Natural killer cell (primary cell): ENCODE measurements at regions of chr11 and their contacts with region 1.

Region 1: DNA sequence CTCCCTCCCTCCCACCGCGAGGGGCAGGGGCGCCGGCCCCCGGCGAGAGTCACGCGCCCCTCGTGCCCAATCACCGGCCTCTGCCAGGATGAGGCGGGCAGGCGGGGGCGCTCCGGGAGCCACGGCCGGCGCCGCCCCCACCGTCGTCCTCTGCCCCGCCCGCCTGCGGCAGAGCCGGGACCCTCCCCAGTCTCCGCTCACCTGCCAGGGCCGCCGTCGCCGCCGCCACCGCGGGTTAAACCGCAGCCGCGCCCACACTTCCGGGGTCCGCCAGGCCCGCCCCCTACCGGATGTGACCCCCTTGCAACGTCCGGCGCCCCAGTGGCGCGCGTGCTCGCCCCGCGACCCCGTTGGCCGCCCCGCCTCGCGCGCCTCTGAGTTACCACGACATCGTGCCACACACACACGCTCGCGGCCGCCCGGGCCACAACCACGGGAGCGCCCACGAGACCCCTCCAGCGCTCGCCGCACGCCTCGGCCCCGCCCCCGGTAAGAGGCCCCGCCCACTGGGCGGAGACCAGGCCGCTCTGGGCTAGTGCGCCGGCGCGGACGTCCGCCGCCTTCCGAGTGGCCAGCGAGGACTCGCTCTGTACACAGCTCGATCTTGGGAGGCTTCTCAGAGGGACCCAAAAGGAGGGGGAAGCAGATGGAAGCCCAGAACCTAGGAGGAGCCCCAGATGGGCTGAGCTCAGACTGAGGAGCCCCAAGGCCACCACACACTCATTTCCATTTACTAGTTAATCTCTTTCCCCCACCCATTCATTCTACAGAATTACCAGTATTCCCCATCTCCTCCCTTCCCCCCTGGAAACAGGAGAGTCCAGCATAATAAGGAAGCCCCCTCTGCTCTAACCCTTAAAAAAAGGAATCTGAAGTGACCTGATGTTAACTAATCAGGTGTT is at the start of gene VPS37C:
- DNase-seq: peak; percentile 94 to 97
- ATAC-seq: peak; percentile 75 to 89 (median 80)
- H3K4me3 ChIP-seq: peak within 1 kb of the TSS; percentile 79
- H3K4me3 Mint-ChIP-seq: peak within 1 kb of the TSS; percentile 94
- H3K27ac ChIP-seq: peak within 1 kb of the TSS; percentile 96
- H3K27ac Mint-ChIP-seq: peak within 1 kb of the TSS; percentile 95 to 97
- H3K4me1 ChIP-seq: peaks cover 26% of the 10 kb centered on the region
- H3K4me1 Mint-ChIP-seq: peaks cover 33 to 42% of the 10 kb centered on the region in 2 donors
- H3K27me3 ChIP-seq: no peaks in the 10 kb centered on the region
- H3K27me3 Mint-ChIP-seq: peaks cover 3 to 9% of the 10 kb centered on the region in 2 donors
- CTCF ChIP-seq: no peak
- total RNA-seq, gene VPS37C: 6.4 to 6.9 (median 6.5) TPM

Region 2: DNA sequence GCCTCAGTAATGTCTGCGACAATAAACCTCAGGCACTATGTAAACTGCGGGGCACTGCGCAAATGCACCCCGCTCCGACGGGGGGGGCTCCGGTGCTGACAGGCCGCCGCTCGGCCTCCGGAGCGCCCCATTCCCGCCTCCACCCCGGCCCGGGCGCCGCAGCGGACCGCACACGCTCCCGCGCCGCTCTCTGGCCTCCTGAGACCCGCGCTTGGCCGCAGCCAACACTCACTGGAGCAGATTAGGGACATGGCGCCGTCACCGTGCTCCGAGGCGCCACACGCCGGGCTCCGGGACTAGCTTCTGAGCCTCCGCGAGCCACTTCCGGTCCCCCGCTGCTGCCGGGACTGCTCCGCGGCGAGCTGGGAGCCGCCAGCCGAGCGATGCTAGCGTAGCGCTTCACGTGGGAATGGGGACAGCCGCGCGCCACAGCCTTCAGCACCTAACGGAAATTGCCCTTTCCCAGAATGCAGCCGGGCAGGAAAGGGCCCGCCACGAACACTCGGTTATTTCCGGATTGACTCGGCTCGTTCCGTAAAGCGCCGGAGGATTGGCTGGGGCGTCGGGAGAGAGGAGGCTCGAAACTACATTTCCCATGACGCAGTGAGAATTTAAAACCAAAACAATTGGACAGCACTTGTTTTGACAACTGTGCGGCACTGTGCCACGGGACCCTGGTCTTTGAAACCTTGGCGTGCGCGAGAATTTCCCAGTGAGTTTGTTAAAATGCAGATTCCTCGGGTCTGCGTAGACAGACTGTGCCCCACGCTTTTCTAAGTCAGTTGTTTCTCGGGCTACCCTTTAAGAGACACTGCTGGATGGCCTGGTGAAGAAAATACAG is 255.1 kb before region 1 on chr11 and contains the start of gene PRPF19:
- intact Hi-C with region 1: loop called (anchors 2 kb)
- DNase-seq: peak; percentile 98 to 99
- ATAC-seq: peak; percentile 95 to 97 (median 95)
- H3K4me3 ChIP-seq: peak within 1 kb of the TSS; percentile 56
- H3K4me3 Mint-ChIP-seq: peak within 1 kb of the TSS; percentile 96
- H3K27ac ChIP-seq: peak within 1 kb of the TSS; percentile 85
- H3K27ac Mint-ChIP-seq: peak within 1 kb of the TSS; percentile 94 to 96
- H3K4me1 ChIP-seq: peaks cover 37% of the 10 kb centered on the region
- H3K4me1 Mint-ChIP-seq: peaks cover 38 to 48% of the 10 kb centered on the region in 2 donors
- H3K27me3 ChIP-seq: no peaks in the 10 kb centered on the region
- H3K27me3 Mint-ChIP-seq: peaks cover 0 to 4% of the 10 kb centered on the region in 2 donors
- CTCF ChIP-seq: no peak
- total RNA-seq, gene PRPF19: 61.0 to 69.7 (median 67.5) TPM

Region 3: DNA sequence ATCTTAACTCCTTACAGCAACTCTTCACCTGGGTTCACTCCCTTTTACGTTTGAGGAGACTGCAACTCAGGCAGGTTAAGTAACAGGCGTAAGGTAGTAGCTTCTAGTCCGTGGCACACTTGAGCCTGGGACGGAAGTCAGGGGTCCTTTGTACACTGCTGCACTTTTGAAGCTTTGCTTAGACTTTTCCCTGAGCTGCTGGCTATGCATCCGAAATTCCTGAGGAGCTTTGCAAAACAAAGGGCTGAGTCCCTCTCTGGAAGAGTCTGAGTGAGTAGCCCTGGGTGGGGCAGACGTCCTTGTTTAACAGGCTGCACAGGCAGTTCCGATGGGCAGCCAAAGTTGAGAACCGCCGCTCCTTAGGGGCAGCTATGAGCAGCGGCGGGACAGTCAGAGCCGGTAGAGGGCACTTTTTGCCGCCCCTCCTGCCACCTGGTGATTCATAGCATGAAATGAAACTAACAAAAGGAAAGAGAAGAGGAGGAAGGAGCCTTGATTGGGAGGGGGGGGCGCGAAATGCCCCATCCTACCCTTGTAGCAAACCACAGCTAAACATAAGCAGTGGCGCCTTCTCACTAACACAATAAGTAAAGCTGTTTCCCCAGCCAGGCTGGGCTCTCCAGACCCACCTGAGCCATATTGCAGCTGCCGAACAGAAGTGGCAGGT is 246.1 kb before region 1 on chr11:
- intact Hi-C with region 1: loop called (anchors 1 kb)
- DNase-seq: peak; percentile 62 to 84
- ATAC-seq: peak; percentile 61 to 78 (median 68)
- H3K4me3 ChIP-seq: peak overlapping the region; percentile 75
- H3K4me3 Mint-ChIP-seq: peak overlapping the region; percentile 95
- H3K27ac ChIP-seq: peak overlapping the region; percentile 91
- H3K27ac Mint-ChIP-seq: peak overlapping the region; percentile 92 to 96
- H3K4me1 ChIP-seq: peaks cover 62% of the 10 kb centered on the region
- H3K4me1 Mint-ChIP-seq: peaks cover 58% of the 10 kb centered on the region in 2 donors
- H3K27me3 ChIP-seq: no peaks in the 10 kb centered on the region
- H3K27me3 Mint-ChIP-seq: no peaks in the 10 kb centered on the region
- CTCF ChIP-seq: peak; percentile 44

Region 4: GRCh38 chr11:61361686-61362541 is 200.5 kb after region 1 on chr11 and contains the starts of genes CYB561A3 and TMEM138:
- intact Hi-C with region 1: loop called (anchors 1 kb)
- DNase-seq: peak; percentile 80 to 91
- ATAC-seq: peak; percentile 92 to 99 (median 93)
- H3K4me3 ChIP-seq: peak within 1 kb of the TSS; percentile 90
- H3K4me3 Mint-ChIP-seq: peak within 1 kb of the TSS; percentile 99
- H3K27ac ChIP-seq: peak within 1 kb of the TSS; percentile 96
- H3K27ac Mint-ChIP-seq: peak within 1 kb of the TSS; percentile 94 to 98
- H3K4me1 ChIP-seq: peaks cover 42% of the 10 kb centered on the region
- H3K4me1 Mint-ChIP-seq: peaks cover 21 to 26% of the 10 kb centered on the region in 2 donors
- H3K27me3 ChIP-seq: no peaks in the 10 kb centered on the region
- H3K27me3 Mint-ChIP-seq: no peaks in the 10 kb centered on the region
- CTCF ChIP-seq: no peak
- total RNA-seq, gene CYB561A3: 24.6 to 33.5 (median 30.2) TPM
- total RNA-seq, gene TMEM138: 63.8 to 75.9 (median 66.5) TPM